ENCODE measurements at regions of chr12 and their contacts with region 1.

Region 1: DNA sequence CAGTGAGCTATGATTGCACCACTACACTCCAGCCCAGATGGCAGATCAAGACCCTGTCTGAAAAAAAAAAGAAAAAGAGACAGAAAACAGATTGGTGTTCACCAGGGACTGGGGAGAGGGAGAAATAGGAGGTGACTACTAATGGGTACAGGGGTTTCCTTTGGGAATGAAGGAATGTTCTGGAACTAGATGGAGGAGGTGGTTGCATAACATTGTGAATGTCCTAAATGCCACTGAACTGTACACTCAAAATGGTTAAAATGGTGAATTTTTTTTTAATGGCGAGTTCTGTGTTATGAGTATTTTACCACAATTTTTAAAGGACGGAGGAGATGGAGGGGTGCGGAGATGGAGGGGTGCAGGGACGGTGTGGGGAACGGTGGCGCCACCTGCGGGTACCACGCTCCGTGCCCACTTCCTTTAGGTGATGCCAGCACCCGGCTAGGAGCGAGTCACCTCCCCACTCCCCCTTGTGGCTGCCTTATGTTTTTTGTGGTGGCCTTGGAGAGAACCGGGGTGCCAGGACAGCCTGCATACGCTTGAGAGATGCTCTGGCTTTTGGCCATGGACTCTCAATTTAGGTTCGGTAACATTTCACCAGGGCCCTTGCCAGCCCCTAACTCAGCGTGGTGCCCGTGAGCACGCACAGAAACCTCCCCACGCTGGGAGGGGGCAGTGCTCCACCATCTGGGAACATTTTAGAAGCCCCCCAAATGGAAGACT is 16.1 kb downstream of the UBC start:
- DNase-seq: peak; percentile 55
- ATAC-seq: peak; percentile 81
- H3K4me3 Mint-ChIP-seq: peak overlapping the region; percentile 29
- H3K27ac Mint-ChIP-seq: no peak overlapping the region
- H3K4me1 Mint-ChIP-seq: peaks cover 45% of the 10 kb centered on the region
- H3K27me3 Mint-ChIP-seq: no peaks in the 10 kb centered on the region
- CTCF ChIP-seq: peak; percentile 33

Region 2: DNA sequence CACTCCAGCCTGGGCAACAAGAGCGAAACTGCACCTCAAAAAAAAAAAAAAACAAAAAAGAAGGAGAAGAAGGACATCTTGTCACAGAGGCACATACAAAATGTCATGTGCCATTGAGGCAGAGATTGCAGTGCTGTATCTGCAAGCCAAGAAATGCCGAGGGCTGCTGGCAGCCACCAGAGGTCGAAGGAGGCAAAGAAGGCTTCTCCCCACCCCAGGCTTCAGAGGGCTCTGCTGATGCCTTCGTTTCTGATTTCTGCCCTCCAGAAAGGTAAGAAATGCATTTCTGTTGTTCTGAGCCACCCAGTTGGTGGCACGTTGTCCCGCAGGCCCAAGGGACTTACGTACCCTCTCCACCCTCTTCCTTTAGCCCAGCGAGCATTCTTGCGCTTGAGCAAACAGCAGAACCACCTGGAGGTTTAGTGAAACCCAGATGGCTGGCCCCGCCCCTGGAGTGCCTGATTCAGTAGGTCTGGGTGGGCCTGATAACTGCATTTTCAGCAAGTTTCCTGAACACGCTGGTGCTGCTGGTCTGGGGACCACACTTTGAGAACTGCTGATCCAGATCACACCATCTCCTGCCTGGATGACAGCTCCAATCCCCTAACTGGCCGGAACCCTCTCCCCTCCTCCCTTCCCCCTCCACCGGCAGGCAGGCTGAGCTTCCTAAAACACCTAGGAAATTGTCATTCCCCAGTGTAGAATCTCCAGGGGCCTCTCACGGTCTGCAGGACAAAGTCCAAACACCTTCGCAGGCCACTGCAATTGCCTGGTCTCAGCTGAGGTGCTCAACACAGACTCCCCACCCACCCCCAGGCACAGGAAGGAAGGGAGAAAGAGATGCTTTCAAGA is 13.5 kb before region 1 on chr12:
- CTCF ChIA-PET with region 1: no interaction called
- POLR2A ChIA-PET with region 1: interaction called, 5 read pairs
- intact Hi-C with region 1: loop called (anchors 1 kb)
- DNase-seq: peak; percentile 60
- ATAC-seq: peak; percentile 95
- H3K4me3 Mint-ChIP-seq: peak overlapping the region; percentile 70
- H3K27ac Mint-ChIP-seq: peak overlapping the region; percentile 87
- H3K4me1 Mint-ChIP-seq: peaks cover 65% of the 10 kb centered on the region
- H3K27me3 Mint-ChIP-seq: no peaks in the 10 kb centered on the region
- CTCF ChIP-seq: no peak

Region 3: GRCh38 chr12:125114365-125115141 is 216.2 kb after region 1 on chr12:
- CTCF ChIA-PET with region 1: no interaction called
- POLR2A ChIA-PET with region 1: no interaction called
- intact Hi-C with region 1: no loop called
- DNase-seq: no peak
- ATAC-seq: peak; percentile 31
- H3K4me3 Mint-ChIP-seq: no peak overlapping the region
- H3K27ac Mint-ChIP-seq: no peak overlapping the region
- H3K4me1 Mint-ChIP-seq: no peaks in the 10 kb centered on the region
- H3K27me3 Mint-ChIP-seq: no peaks in the 10 kb centered on the region
- CTCF ChIP-seq: no peak